MCF 10A (cell line): ENCODE measurements at regions of chr6 and their contacts with region 1.

Region 1: GRCh38 chr6:166556871-166557322 is 29.6 kb downstream of the RAMACL start:
- DNase-seq: peak; percentile 99
- H3K4me3 Mint-ChIP-seq: peak overlapping the region; percentile 68
- H3K27ac Mint-ChIP-seq: peak overlapping the region; percentile 86
- H3K4me1 Mint-ChIP-seq: peaks cover 64% of the 10 kb centered on the region
- H3K27me3 Mint-ChIP-seq: no peaks in the 10 kb centered on the region
- CTCF ChIP-seq: no peak

Region 2: DNA sequence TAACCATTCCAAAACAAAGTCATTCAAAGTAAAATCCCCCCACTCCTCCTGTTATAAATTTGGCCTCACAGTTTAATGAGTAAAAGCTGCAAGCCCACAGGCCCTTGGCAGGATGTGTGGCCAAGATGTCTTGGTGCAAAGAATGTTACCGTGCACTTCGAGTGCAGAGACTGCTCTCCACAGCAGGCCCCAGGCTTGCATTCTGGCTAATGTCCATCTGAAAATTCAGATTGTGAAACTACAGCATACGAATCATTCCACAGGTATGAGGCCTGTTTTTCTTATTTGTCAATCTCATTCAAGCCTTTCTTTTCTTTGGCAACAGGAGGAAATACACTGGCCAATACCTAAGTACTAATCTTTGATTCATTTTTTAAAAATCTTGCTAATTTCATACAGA is 63.0 kb after region 1 on chr6:
- CTCF ChIA-PET with region 1: interaction called, 3 read pairs
- POLR2A ChIA-PET with region 1: interaction called, 86 read pairs
- intact Hi-C with region 1: loop called (anchors 1 kb)
- DNase-seq: peak; percentile 94
- H3K4me3 Mint-ChIP-seq: peak overlapping the region; percentile 67
- H3K27ac Mint-ChIP-seq: peak overlapping the region; percentile 81
- H3K4me1 Mint-ChIP-seq: peaks cover 63% of the 10 kb centered on the region
- H3K27me3 Mint-ChIP-seq: no peaks in the 10 kb centered on the region
- CTCF ChIP-seq: no peak